ENCODE measurements at regions of chr19 and their contacts with region 1.

Region 1: DNA sequence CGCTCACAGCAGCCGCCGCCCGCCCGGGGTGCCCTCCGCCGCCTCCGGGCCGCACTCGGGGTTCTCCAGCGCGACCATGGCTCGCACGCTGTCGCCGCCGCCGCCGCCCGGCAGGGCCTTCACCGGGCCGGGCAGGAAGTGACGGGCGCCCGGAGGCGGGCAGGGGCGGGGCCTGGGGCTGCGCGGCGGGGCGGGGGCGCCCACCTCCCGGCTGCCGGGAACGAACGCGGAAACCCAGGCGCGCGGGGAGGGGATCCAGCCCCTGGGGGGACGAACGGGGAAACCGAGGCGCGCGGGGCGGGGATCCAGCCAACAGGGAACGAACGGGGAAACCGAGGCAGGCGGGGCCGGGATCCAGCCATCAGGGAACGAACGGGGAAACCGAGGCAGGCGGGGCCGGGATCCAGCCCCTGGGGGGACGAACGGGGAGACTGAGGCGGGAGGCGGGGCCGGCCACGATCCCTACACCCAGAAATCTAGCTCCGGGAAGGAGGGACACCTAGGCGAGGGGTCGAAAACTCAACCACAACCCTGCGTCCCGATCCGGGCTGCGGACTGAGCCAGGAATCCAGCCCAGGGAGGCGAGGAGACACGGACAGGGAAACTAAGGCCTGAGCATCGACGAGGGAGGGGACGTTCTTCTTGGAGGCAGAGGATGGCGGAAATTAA is at the start of gene R3HDM4:
- DNase-seq: peak; percentile 84
- H3K4me3 Mint-ChIP-seq: peak within 1 kb of the TSS; percentile 83
- H3K27ac Mint-ChIP-seq: peak within 1 kb of the TSS; percentile 93
- H3K4me1 Mint-ChIP-seq: peaks cover 37% of the 10 kb centered on the region
- H3K27me3 Mint-ChIP-seq: peaks cover 4% of the 10 kb centered on the region
- total RNA-seq, gene R3HDM4: 120 to 121 TPM

Region 2: DNA sequence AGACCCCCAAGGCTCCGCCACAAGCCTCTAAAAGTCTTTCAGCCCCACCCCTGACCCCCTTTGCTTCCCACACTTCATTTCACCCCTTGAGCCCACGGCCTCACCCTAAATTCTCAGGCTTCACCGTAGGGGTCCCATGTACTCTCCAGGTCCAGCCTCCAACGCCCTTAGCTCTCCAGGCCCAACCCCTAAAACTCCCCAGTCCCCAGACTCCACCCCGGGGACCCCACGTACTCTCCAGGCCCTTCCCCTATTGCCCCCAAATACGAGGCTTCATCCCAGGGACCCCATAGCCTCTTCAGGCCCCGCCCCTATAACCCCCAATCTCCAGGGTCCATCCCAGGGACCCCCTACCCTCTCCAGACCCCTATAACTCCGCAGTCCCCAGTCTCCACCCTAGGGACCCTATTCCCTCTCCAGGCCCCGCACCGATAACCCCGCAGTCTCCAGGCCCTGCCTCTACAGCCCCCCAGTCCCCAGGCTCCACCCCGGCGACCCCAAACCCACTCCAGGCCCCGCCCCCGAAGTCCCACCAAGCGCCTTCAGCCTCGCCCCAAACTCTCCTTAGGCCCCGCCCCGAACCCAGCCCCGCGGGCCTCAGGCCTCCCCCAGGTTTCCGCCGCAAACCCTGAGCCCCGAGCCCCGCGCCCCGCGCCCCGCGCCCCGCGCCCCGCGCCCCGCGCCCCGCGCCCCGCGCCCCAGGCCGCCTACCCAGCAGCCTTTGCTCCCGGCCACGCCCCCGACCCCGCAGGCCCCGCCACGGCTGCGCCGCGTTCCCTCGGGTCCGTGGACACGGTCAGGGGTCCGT is 20.8 kb before region 1 on chr19:
- CTCF ChIA-PET with region 1: interaction called, 17 read pairs
- POLR2A ChIA-PET with region 1: interaction called, 3 read pairs
- DNase-seq: peak; percentile 54
- H3K4me3 Mint-ChIP-seq: peak overlapping the region; percentile 92
- H3K27ac Mint-ChIP-seq: peak overlapping the region; percentile 98
- H3K4me1 Mint-ChIP-seq: peaks cover 28% of the 10 kb centered on the region
- H3K27me3 Mint-ChIP-seq: no peaks in the 10 kb centered on the region

Region 3: GRCh38 chr19:937259-937694 is 24.1 kb after region 1 on chr19:
- CTCF ChIA-PET with region 1: no interaction called
- POLR2A ChIA-PET with region 1: no interaction called
- DNase-seq: peak; percentile 75
- H3K4me3 Mint-ChIP-seq: no peak overlapping the region
- H3K27ac Mint-ChIP-seq: peak overlapping the region; percentile 68
- H3K4me1 Mint-ChIP-seq: peaks cover 42% of the 10 kb centered on the region
- H3K27me3 Mint-ChIP-seq: no peaks in the 10 kb centered on the region

Measured in activated CD4-positive, alpha-beta T cell treated with anti-CD3 and anti-CD28 coated beads, Interleukin-2, amount 10 ng/mL, durations not matched to agents 7 days and 5 days (primary cell).